ENCODE measurements at regions of chr5 and their contacts with region 1.

Region 1: DNA sequence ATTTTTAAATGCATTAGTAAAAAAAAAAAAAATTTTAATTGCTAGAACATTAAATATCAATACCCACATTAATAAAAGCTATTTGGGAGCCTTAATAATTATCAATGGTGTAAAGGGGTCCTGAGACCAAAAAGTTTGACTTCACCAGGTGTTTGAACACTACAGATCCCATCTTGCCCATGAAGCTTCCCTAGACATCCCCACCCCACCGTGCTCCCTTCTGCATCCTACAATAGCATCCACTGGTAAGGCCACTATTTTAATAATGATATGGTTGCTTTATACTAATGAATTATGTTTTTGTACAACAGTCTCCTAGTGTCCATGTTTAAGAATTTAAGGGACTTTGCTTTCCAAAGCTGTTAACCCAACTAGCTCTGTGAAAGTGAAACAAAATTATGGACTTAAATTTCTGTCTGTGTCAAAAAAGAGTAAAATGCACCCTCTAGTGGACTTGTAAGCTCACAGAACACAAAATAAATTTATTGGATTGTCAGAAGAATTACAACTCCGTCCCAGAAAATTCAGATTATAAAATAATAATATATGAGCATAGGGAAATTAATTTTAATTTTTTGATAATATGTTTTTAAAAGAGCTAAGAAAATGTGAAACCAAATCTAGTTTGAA is 76.0 kb downstream of the ARL15 start:
- DNase-seq: peak; percentile 26
- H3K4me3 ChIP-seq: no peak overlapping the region
- H3K27ac ChIP-seq: no peak overlapping the region
- H3K27me3 ChIP-seq: no peaks in the 10 kb centered on the region
- CTCF ChIP-seq: peak; percentile 69

Region 2: GRCh38 chr5:53123702-53124101 is 1110.7 kb before region 1 on chr5:
- CTCF ChIA-PET with region 1: interaction called, 12 read pairs
- POLR2A ChIA-PET with region 1: no interaction called
- DNase-seq: no peak
- H3K4me3 ChIP-seq: no peak overlapping the region
- H3K27ac ChIP-seq: no peak overlapping the region
- H3K27me3 ChIP-seq: no peaks in the 10 kb centered on the region
- CTCF ChIP-seq: peak; percentile 35; the same call in 1 of the 2 replicates

Region 3: GRCh38 chr5:53170748-53171349 is 1063.6 kb before region 1 on chr5:
- CTCF ChIA-PET with region 1: interaction called, 27 read pairs
- POLR2A ChIA-PET with region 1: no interaction called
- DNase-seq: no peak
- H3K4me3 ChIP-seq: no peak overlapping the region
- H3K27ac ChIP-seq: no peak overlapping the region
- H3K27me3 ChIP-seq: no peaks in the 10 kb centered on the region
- CTCF ChIP-seq: peak; percentile 76

Region 4: DNA sequence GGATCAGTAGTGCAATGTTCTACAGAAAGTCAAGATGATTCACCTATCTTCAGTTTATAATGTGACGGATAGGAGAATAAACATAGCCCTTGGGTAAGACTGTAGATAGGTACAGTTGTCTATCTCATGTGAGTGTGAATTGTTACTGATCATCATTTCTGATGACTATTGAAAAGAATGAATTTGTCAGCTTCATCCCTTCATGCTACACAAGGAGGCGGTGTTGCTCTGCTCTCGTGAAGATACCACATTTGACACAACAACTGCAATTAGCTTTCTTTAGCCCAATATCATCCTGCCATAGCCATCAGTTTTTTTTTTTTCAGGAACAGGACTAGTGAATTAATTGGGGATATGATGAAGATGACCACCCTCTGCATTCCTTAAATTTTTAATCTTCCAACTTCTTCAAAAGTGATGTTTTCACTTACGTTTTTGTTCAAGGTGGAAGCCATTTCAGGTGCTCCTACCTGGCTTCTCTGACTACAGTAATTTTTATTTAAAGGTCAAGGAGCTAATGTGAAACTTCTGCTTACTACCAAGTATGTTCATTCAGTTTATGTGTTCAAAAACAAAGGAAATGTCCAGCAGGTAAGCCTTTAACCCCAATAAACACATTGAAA is 972.0 kb before region 1 on chr5:
- CTCF ChIA-PET with region 1: interaction called, 15 read pairs
- POLR2A ChIA-PET with region 1: no interaction called
- DNase-seq: no peak
- H3K4me3 ChIP-seq: no peak overlapping the region
- H3K27ac ChIP-seq: no peak overlapping the region
- H3K27me3 ChIP-seq: no peaks in the 10 kb centered on the region
- CTCF ChIP-seq: peak; percentile 71

Region 5: DNA sequence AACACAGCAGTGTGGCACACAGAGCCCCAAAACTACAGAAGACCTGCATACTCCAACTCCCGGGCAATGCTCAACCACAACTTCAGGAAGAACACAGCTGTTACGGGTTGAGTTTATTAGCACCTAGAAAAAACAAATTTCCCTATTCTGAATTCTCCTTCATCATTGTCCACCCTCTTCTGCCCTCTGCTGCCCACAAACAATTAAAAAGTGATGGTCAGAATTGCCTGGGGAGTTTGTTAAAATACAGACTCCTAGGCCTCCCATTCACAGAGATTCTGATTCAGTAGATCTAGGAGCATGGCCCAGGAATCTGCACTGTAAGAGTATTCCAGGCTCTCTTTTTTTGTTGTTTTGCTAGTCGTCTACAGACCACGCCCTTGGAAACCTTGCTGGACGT is 363.4 kb before region 1 on chr5:
- CTCF ChIA-PET with region 1: no interaction called
- POLR2A ChIA-PET with region 1: no interaction called
- DNase-seq: no peak
- H3K4me3 ChIP-seq: no peak overlapping the region
- H3K27ac ChIP-seq: no peak overlapping the region
- H3K27me3 ChIP-seq: no peaks in the 10 kb centered on the region
- CTCF ChIP-seq: 0 out of 2 replicates have a peak, but pooled peaks have one; percentile 19